Activated naive CD4-positive, alpha-beta T cell treated with anti-CD3 and anti-CD28 coated beads for 36 hours (primary cell): ENCODE measurements at regions of chr1 and their contacts with region 1.

Region 1: DNA sequence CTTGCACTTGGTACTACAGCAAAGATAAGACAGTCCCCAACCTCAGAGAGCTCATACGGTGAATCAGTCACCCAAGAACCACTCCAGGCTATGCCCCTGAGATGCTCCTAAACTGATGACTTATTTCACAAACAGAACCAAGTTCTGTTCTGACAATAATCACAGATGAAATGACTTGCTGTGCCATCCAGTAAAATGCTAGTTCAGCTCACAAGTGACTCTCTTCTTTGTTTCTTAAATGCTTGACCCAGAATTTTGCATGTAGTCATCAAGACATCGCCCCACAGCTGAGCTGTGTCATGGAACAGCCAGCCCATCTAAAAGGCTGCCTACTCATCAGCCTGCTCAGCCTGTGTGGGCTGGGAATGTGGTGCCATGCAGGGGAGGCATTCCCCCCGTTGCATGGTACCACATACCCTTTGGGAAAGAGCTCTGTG is 6.1 kb upstream of the SLC19A2 start:
- DNase-seq: peak; percentile 67
- H3K4me3 Mint-ChIP-seq: no peak overlapping the region
- H3K27ac Mint-ChIP-seq: peak overlapping the region; percentile 27
- H3K4me1 Mint-ChIP-seq: peaks cover 52% of the 10 kb centered on the region
- H3K27me3 Mint-ChIP-seq: peaks cover 8% of the 10 kb centered on the region

Region 2: GRCh38 chr1:169460191-169460833 is 31.6 kb before region 1 on chr1:
- CTCF ChIA-PET with region 1: no interaction called
- intact Hi-C with region 1: loop called (anchors 1 kb)
- DNase-seq: peak; percentile 24
- H3K4me3 Mint-ChIP-seq: peak overlapping the region; percentile 49
- H3K27ac Mint-ChIP-seq: no peak overlapping the region
- H3K4me1 Mint-ChIP-seq: peaks cover 25% of the 10 kb centered on the region
- H3K27me3 Mint-ChIP-seq: peaks cover 11% of the 10 kb centered on the region

Region 3: DNA sequence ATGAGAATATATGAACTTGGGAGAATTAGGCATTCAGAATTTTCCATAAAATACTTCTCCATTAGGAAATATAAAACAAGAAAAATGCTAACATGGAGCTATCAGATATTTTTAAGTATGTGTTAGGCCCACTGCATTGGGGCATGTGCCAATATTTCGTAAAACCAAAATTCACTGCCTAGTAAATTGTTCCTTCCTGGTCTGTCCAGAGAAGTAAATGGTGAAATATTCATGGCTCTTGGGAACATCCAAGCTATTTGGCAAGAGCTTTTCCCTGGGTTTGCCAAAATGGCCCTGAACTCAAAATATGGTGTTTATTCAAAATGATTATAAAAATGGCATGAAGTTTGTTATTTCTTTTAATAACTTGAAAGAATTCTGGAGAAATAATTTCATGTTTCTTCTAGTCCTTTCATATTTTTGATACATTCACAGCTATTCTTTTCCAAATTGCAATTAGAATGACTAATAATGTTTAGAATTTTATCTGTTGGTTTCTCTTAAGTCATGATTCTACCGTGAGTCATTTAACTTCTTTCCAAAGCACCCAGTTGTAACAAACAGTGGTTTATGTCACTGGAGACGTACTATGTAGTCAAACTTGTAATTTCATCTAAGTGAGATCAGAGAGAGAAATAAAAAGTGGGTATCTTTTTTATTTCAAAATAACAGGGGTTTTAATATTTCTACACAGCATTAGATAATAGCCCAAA is 19.6 kb after region 1 on chr1:
- CTCF ChIA-PET with region 1: no interaction called
- intact Hi-C with region 1: loop called (anchors 2 kb)
- DNase-seq: no peak
- H3K4me3 Mint-ChIP-seq: no peak overlapping the region
- H3K27ac Mint-ChIP-seq: peak overlapping the region; percentile 34
- H3K4me1 Mint-ChIP-seq: peaks cover 25% of the 10 kb centered on the region
- H3K27me3 Mint-ChIP-seq: no peaks in the 10 kb centered on the region

Region 4: GRCh38 chr1:169893494-169894362 is 401.9 kb after region 1 on chr1 and contains the start of gene SCYL3:
- CTCF ChIA-PET with region 1: no interaction called
- intact Hi-C with region 1: no loop called
- DNase-seq: peak; percentile 94
- H3K4me3 Mint-ChIP-seq: peak within 1 kb of the TSS; percentile 87
- H3K27ac Mint-ChIP-seq: peak within 1 kb of the TSS; percentile 100
- H3K4me1 Mint-ChIP-seq: peaks cover 34% of the 10 kb centered on the region
- H3K27me3 Mint-ChIP-seq: no peaks in the 10 kb centered on the region
- total RNA-seq, gene SCYL3: 8.8 TPM